Transverse colon (tissue), 4 donors: ENCODE measurements at regions of chr3 and their contacts with region 1.

Region 1: DNA sequence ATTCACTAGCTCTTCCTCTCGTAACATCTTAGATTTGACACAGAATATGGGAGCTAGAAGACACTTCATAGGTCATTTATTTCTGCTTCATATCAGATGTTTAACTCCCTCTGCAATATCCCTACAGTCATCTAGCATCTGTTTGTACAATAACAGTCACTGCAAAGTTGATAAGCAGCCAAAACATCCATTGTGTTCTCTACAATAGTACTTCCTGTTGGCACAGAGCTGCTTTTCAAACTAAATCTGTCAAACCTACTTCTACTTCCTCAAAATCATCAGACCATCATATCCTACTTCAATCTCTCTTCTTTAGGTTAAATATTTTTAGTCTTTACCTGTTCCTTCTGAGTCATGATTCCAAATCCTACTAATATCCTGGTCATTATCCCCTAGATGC is 233.2 kb downstream of the FGF12 start:
- DNase-seq: no peak
- H3K4me3 ChIP-seq: no peak overlapping the region
- H3K27ac ChIP-seq: no peak overlapping the region
- H3K4me1 ChIP-seq: no peaks in the 10 kb centered on the region
- H3K27me3 ChIP-seq: no peaks in the 10 kb centered on the region
- CTCF ChIP-seq: no peak
- EP300 ChIP-seq: no peak
- POLR2A ChIP-seq: no peak

Region 2: GRCh38 chr3:194029846-194030245 is 1535.7 kb after region 1 on chr3:
- in situ Hi-C with region 1: no loop called
- intact Hi-C with region 1: loop called (anchors 5 kb)
- DNase-seq: peak; percentile 51
- H3K4me3 ChIP-seq: no peak overlapping the region
- H3K27ac ChIP-seq: peak overlapping the region in 1 of 4 donors; percentile 20
- H3K4me1 ChIP-seq: peaks cover 0 to 41% (median 19%) of the 10 kb centered on the region in 4 donors
- H3K27me3 ChIP-seq: no peaks in the 10 kb centered on the region
- CTCF ChIP-seq: no peak
- EP300 ChIP-seq: no peak
- POLR2A ChIP-seq: no peak